AG04449 (cell line): ENCODE measurements at regions of chr6 and their contacts with region 1.

Region 1: DNA sequence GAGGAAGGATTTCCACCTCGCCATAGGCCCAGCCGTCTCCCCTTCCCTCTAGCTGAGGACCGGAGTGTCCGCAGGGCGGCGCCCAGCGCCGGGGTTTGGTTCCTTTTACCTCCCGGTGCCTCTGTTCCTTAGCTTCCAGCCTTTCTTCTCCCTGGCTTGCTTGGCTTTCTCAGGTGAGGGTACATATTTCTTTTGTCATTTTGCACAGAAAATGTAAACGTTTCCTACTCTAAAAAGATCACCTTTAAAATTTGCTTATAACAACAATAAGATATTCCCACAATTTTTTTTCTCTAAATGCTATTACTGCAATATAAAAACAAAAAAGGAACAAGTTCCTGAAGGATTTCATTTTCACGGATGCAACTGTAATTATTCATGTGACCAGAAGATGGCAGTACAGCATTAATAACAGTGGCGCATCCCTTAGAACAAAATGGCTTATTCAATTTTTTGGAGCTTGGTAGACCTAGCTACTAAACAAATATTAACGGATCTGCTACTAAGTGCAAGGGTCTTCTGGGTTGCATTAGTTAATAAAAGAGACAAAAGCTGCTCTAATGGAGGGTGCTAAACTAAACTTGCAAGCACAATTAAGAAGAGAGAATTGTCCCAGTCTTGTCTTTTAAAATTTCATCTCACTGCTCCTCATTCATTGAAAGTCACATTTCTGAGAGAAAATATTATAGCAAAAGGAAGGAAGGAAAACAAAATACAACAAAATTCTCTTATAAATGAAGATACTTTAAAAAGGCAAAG is 172.9 kb downstream of the ADGRG6 start:
- DNase-seq: no peak
- H3K4me3 ChIP-seq: no peak overlapping the region
- CTCF ChIP-seq: peak; percentile 52

Region 2: DNA sequence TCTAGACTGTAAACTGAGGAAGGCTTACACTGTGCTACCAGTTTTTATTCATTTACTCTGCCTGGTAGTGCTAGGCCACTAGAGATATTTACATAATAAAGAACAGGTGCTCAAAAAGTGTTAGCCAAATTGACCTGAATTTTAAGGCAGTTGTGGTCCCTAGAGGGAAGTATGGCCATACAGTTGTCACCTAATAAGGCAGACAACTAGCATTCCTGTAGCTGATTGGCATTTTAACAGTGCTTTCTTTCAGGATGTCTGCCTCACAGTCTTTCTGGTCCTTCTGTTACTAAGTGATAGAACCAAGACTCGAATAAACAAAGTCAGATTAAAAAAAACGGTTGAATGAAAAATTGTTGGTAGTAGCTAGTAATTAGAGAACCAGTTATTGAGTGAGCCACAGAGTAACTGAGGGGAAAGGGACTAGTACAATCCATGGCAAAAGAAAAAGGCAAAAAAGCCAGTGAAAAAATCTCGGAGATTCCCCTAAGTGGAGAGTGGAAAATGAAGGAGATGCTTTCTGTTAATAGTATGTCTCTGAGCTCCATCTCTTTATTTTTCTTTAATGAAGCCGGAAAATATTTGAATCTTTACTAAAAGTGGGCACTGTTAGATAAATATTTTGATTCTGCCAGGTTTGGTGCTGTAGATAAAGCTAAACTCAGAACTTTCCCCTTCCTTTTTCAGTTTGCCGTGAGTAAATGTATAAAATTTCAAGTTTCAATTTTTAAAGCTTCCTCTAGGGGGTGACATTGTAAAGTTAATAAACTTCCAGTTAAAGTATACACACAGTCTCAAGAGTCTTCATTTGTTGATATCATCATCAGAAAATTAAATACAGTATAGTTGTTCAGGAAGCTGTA is 318.6 kb before region 1 on chr6:
- CTCF ChIA-PET with region 1: interaction called, 32 read pairs
- POLR2A ChIA-PET with region 1: no interaction called
- DNase-seq: no peak
- H3K4me3 ChIP-seq: no peak overlapping the region
- CTCF ChIP-seq: no peak

Region 3: DNA sequence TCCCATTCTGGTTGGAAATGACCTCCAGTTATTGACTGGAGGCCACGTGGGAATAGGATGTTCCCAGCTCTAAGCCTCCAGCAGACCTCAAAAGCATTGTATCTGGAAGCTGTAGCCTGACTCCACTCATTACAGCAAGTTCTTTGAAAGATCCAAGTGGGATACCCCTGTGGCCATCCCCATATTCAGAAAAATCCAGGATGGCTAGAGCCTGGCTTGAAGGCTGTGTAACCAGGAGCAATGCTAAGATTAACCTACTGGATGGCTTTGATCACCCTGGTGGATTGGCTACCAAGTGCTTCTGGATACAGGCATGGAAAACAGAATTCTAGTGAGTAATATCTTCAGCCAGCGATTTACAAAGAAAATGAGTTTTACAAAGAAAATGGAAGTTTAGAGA is 21.7 kb before region 1 on chr6:
- CTCF ChIA-PET with region 1: interaction called, 12 read pairs
- POLR2A ChIA-PET with region 1: no interaction called
- DNase-seq: no peak
- H3K4me3 ChIP-seq: no peak overlapping the region
- CTCF ChIP-seq: no peak

Region 4: DNA sequence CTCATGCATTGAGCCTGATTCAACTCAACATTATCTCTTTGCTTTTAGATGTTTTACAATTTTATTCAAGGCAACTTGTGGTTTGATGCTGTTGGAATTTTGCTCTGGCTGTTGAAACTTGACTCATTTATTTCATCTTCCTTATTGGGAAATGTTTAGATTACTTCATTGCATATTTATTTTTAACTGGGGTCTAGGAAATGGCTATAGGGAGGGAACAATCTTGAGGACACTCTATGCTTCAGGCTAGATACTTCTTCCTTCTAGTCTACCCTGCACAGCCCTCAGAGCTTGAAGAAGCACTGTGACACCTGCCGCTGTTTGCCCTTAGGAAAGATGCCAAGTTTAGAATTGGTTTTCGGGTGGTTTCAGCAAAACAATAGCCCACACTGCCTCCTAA is 10.5 kb after region 1 on chr6:
- CTCF ChIA-PET with region 1: interaction called, 28 read pairs
- POLR2A ChIA-PET with region 1: no interaction called
- DNase-seq: no peak
- H3K4me3 ChIP-seq: no peak overlapping the region
- CTCF ChIP-seq: no peak

Region 5: GRCh38 chr6:142692942-142693341 is 218.2 kb after region 1 on chr6:
- CTCF ChIA-PET with region 1: interaction called, 17 read pairs
- POLR2A ChIA-PET with region 1: no interaction called
- DNase-seq: peak; percentile 79
- H3K4me3 ChIP-seq: peak overlapping the region; percentile 31
- CTCF ChIP-seq: peak; percentile 87

Region 6: GRCh38 chr6:143575440-143575839 is 1100.7 kb after region 1 on chr6:
- CTCF ChIA-PET with region 1: interaction called, 10 read pairs
- POLR2A ChIA-PET with region 1: no interaction called
- DNase-seq: no peak
- H3K4me3 ChIP-seq: no peak overlapping the region
- CTCF ChIP-seq: peak; percentile 77